AG04450 (cell line): ENCODE measurements at regions of chr16 and their contacts with region 1.

Region 1: GRCh38 chr16:83441517-83441916 is 366.3 kb upstream of the HSBP1 start:
- DNase-seq: no peak
- H3K4me3 ChIP-seq: no peak overlapping the region
- H3K27ac ChIP-seq: no peak overlapping the region
- H3K27me3 ChIP-seq: no peaks in the 10 kb centered on the region
- CTCF ChIP-seq: no peak

Region 2: DNA sequence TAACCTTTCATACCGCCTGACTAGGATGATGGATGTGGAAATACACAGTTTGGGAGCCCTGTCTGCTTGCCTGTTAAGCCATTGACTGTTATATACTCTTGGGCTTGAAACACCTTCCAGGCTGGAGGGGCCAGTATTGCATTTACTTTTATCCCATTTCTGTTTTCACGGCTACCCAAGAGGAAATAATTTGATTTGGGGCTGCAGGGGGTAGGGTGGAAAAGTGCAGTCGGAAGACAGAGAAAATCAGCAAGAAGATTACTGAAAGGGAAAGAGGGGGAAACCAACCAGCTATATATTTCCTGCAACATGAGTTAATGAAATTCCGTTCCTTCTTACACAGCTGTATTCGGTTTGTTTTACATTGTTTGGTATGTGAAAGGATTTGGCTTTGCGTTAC is 612.2 kb before region 1 on chr16:
- CTCF ChIA-PET with region 1: interaction called, 14 read pairs
- POLR2A ChIA-PET with region 1: no interaction called
- DNase-seq: no peak
- H3K4me3 ChIP-seq: no peak overlapping the region
- H3K27ac ChIP-seq: no peak overlapping the region
- H3K27me3 ChIP-seq: no peaks in the 10 kb centered on the region
- CTCF ChIP-seq: no peak

Region 3: GRCh38 chr16:83550183-83550569 is 108.7 kb after region 1 on chr16:
- CTCF ChIA-PET with region 1: no interaction called
- POLR2A ChIA-PET with region 1: no interaction called
- DNase-seq: no peak
- H3K4me3 ChIP-seq: no peak overlapping the region
- H3K27ac ChIP-seq: no peak overlapping the region
- H3K27me3 ChIP-seq: no peaks in the 10 kb centered on the region
- CTCF ChIP-seq: no peak